H1 (cell line): ENCODE measurements at regions of chr19 and their contacts with region 1.

Region 1: DNA sequence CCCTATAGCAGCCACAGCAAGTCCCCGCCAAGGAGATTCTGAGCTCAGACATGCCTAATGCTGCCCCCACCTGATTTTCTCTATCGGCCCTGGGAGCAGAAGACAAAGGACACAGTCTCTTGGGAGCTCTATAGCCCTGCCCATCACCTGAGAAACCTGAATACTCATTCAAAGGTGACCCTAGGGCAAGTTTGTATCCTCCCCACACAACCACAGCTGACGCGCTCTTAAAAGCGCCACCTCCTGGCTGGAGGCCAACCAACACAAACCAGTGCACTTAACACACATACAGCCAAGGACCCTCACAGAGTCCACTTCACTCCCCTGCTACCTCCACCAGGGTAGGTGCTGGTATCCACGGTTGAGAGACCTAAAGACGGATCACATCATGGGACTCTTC is 8.8 kb upstream of the IGFL4 start:
- DNase-seq: peak; percentile 27 to 81
- H3K4me3 ChIP-seq: peak overlapping the region in 1 of 4 experiments; percentile 17; a peak in 1 of 8 replicates
- H3K27ac ChIP-seq: no peak overlapping the region
- H3K4me1 ChIP-seq: no peaks in the 10 kb centered on the region
- H3K27me3 ChIP-seq: no peaks in the 10 kb centered on the region; a peak in 2 of 7 replicates
- CTCF ChIP-seq: peak; percentile 77 to 89 (median 82)
- EP300 ChIP-seq: no peak
- POLR2A ChIP-seq: no peak
- RAD21 ChIP-seq: peak; percentile 27 to 57

Region 2: DNA sequence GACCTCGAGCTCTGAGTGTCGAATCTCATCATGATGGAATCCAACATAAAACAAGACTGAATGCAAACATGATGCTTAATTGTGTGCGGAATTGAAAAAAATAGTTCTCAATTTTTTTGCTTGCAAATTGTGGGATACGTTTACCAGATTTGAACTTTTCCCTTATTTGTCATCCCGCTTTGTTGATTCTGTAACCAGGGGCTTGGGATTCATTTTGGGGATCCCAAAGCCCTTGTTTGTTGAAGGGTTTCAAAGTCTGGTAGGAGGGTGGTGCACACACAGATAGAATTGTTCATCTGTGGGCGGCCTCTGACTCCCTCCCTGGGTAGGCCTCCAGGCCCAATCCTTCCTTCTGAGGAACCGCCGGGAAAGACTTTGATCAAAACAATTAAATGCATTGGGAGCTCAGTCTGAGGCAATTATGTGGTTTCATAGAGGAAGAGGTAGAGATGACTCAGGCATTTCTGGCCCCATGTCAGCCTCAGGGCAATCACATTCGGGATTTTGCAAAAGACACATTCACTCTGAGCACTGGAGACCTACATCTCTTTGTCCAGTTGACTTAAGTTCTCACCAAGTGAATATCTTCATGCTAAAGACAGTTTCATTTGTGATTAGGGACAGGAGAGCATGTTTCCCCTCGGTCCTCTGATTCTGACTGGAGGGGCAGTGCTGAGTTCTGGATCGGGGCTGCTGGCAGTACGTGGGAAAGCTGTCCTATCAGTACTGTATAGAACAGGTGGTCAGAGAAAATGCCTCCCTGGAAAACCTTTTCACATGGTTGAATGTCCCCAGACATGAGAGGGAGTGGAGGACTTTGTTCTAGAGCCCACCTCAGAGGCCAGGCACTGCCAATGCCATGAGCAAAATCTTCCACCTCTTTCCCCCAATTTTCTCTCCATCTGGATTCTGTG is 19.0 kb after region 1 on chr19:
- CTCF ChIA-PET with region 1: interaction called, 10 read pairs
- POLR2A ChIA-PET with region 1: no interaction called
- DNase-seq: no peak
- H3K4me3 ChIP-seq: no peak overlapping the region
- H3K27ac ChIP-seq: no peak overlapping the region
- H3K4me1 ChIP-seq: no peaks in the 10 kb centered on the region
- H3K27me3 ChIP-seq: no peaks in the 10 kb centered on the region; a peak in 2 of 7 replicates
- CTCF ChIP-seq: no peak
- EP300 ChIP-seq: no peak
- POLR2A ChIP-seq: no peak
- RAD21 ChIP-seq: no peak

Region 3: GRCh38 chr19:46090444-46090843 is 40.8 kb after region 1 on chr19:
- CTCF ChIA-PET with region 1: no interaction called
- POLR2A ChIA-PET with region 1: no interaction called
- DNase-seq: no peak
- H3K4me3 ChIP-seq: no peak overlapping the region
- H3K27ac ChIP-seq: no peak overlapping the region
- H3K4me1 ChIP-seq: no peaks in the 10 kb centered on the region
- H3K27me3 ChIP-seq: peaks cover 0 to 2% (median 0%) of the 10 kb centered on the region in 4 experiments; a peak in 1 of 7 replicates
- CTCF ChIP-seq: no peak
- EP300 ChIP-seq: no peak
- POLR2A ChIP-seq: no peak
- RAD21 ChIP-seq: no peak